ENCODE measurements at regions of chr5 and their contacts with region 1.

Region 1: GRCh38 chr5:157994906-157995519 is 136.1 kb upstream of the CLINT1 start:
- DNase-seq: peak; percentile 18
- H3K4me3 ChIP-seq: no peak overlapping the region
- H3K27ac ChIP-seq: no peak overlapping the region
- H3K27me3 ChIP-seq: no peaks in the 10 kb centered on the region
- CTCF ChIP-seq: peak; percentile 80

Region 2: GRCh38 chr5:157761690-157762621 is 233.1 kb before region 1 on chr5:
- CTCF ChIA-PET with region 1: interaction called, 87 read pairs
- POLR2A ChIA-PET with region 1: no interaction called
- DNase-seq: no peak
- H3K4me3 ChIP-seq: no peak overlapping the region
- H3K27ac ChIP-seq: no peak overlapping the region
- H3K27me3 ChIP-seq: no peaks in the 10 kb centered on the region
- CTCF ChIP-seq: peak; percentile 82

Region 3: DNA sequence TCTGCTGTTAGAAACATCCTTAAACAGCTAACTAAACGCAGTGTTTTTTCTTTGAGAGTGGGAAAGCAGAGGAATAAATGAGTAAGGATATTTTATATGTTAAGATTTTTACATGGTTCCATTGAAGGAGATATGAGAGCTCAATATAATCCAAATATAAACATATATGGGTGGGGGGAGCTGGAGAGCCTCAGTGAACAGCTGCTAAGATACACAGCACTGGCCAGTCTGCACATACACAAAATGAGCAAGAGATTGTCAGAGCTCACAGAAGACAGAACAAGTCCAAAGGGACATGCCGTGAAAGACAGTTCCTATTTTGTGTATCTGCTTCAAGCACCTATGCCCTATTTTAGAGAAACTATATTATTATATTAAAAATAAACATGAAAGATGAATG is 182.9 kb before region 1 on chr5:
- CTCF ChIA-PET with region 1: interaction called, 71 read pairs
- POLR2A ChIA-PET with region 1: no interaction called
- DNase-seq: no peak
- H3K4me3 ChIP-seq: no peak overlapping the region
- H3K27ac ChIP-seq: no peak overlapping the region
- H3K27me3 ChIP-seq: no peaks in the 10 kb centered on the region
- CTCF ChIP-seq: no peak

Region 4: DNA sequence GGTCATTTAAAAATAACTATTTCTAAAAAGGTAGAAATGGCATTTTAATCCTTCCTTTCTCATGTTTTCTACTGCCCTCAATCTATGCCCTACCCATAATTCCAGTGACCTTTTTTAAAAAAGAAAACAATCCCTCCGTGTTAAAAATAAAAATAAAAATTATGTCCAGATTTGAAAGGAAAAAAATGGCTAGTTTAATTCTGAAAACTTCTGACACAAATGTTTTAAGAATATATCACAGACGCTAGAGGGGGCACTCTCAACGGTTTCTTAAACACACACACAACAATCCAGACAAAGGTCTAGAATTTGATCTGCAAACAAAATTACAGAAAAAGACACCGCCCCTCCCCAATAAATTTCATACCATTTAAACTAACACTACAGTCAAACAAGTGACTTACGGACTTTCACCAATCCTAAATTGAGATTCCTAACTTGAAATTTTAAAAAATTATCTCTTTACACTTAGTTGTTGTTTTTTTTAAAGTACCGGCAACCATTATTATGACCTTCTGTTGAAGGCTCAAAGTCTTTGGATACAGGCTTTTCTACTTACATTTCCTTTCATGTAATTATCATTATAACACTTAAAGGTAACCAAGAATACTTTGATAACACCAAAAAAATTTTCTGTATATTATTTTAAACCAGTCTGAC is 174.3 kb before region 1 on chr5:
- CTCF ChIA-PET with region 1: interaction called, 71 read pairs
- POLR2A ChIA-PET with region 1: no interaction called
- DNase-seq: peak; percentile 6
- H3K4me3 ChIP-seq: no peak overlapping the region
- H3K27ac ChIP-seq: no peak overlapping the region
- H3K27me3 ChIP-seq: no peaks in the 10 kb centered on the region
- CTCF ChIP-seq: peak; percentile 68

Region 5: GRCh38 chr5:157858527-157859226 is 136.3 kb before region 1 on chr5 and contains the start of gene CLINT1:
- CTCF ChIA-PET with region 1: interaction called, 19 read pairs
- POLR2A ChIA-PET with region 1: no interaction called
- DNase-seq: peak; percentile 41
- H3K4me3 ChIP-seq: peak within 1 kb of the TSS; percentile 92
- H3K27ac ChIP-seq: peak within 1 kb of the TSS; percentile 77
- H3K27me3 ChIP-seq: no peaks in the 10 kb centered on the region
- CTCF ChIP-seq: no peak
- polyA plus RNA-seq, gene CLINT1: 103 and 107 TPM in 2 replicates

Region 6: DNA sequence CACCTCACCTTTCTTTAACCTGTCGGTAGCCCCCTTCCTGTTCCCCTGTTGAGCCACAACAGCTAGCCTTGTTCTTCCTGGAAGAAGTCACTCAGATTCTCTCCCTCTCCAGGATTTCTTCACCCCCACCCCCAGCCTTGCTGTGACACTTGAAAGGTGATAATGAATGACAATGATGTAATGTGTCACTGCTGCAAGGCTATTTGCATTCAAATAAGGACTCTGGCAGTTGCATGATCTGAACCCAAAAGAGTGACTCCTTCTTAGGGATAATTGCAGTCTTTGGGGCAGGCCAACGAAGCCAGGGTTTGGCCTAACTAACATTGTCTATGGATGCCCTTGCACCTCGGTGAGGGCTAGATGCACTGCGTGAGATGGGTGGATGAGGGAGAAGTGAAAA is 18.3 kb after region 1 on chr5:
- CTCF ChIA-PET with region 1: interaction called, 10 read pairs
- POLR2A ChIA-PET with region 1: no interaction called
- DNase-seq: no peak
- H3K4me3 ChIP-seq: no peak overlapping the region
- H3K27ac ChIP-seq: no peak overlapping the region
- H3K27me3 ChIP-seq: no peaks in the 10 kb centered on the region
- CTCF ChIP-seq: no peak

Measured in AG04450 (cell line).